ENCODE measurements at regions of chr14 and their contacts with region 1.

Region 1: GRCh38 chr14:37658156-37658555 is 62.7 kb downstream of the TTC6 start:
- DNase-seq: peak; percentile 34
- ATAC-seq: peak; percentile 54
- H3K4me3 ChIP-seq: no peak overlapping the region
- H3K27ac ChIP-seq: no peak overlapping the region
- H3K4me1 ChIP-seq: peaks cover 13% of the 10 kb centered on the region; the same call in 1 of the 2 replicates
- H3K27me3 ChIP-seq: no peaks in the 10 kb centered on the region
- CTCF ChIP-seq: no peak
- EP300 ChIP-seq: no peak
- POLR2A ChIP-seq: no peak
- RAD21 ChIP-seq: no peak

Region 2: GRCh38 chr14:37594238-37594914 is 63.8 kb before region 1 on chr14:
- CTCF ChIA-PET with region 1: no interaction called
- POLR2A ChIA-PET with region 1: no interaction called
- in situ Hi-C with region 1: no loop called
- intact Hi-C with region 1: no loop called
- DNase-seq: peak; percentile 99
- ATAC-seq: peak; percentile 19
- H3K4me3 ChIP-seq: peak overlapping the region; percentile 87 to 96 (median 95)
- H3K27ac ChIP-seq: peak overlapping the region; percentile 96
- H3K4me1 ChIP-seq: peaks cover 43% of the 10 kb centered on the region
- H3K27me3 ChIP-seq: no peaks in the 10 kb centered on the region; a peak in 1 of 5 replicates
- CTCF ChIP-seq: peak; percentile 95
- EP300 ChIP-seq: peak in 1 of 2 experiments; percentile 23; a peak in 1 of 4 replicates
- POLR2A ChIP-seq: no peak
- RAD21 ChIP-seq: peak; percentile 88

Region 3: GRCh38 chr14:37637341-37637740 is 20.8 kb before region 1 on chr14:
- CTCF ChIA-PET with region 1: no interaction called
- POLR2A ChIA-PET with region 1: no interaction called
- in situ Hi-C with region 1: no loop called
- intact Hi-C with region 1: loop called (anchors 2 kb)
- DNase-seq: no peak
- ATAC-seq: no peak
- H3K4me3 ChIP-seq: no peak overlapping the region
- H3K27ac ChIP-seq: no peak overlapping the region
- H3K4me1 ChIP-seq: no peaks in the 10 kb centered on the region
- H3K27me3 ChIP-seq: no peaks in the 10 kb centered on the region
- CTCF ChIP-seq: no peak
- EP300 ChIP-seq: no peak
- POLR2A ChIP-seq: no peak
- RAD21 ChIP-seq: no peak

Region 4: DNA sequence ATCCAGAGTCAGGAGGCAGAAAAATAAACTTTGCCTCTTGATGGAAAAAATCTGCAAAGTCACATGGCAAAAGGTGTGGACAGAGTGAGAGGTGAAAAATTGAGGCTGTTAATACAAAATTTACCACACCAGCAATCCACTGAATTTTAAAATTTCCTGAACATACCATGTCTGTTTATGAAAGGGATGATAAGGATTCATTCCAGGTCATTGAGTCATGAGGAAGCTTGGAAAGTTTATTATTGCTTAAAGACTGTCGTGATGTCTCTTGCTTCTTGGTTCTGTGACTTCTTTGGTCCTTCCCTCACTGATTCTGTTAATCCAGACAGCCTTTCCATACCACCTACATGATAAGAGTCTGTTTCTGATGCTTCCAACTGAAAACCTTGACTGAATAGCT is 10.5 kb after region 1 on chr14:
- CTCF ChIA-PET with region 1: no interaction called
- POLR2A ChIA-PET with region 1: no interaction called
- in situ Hi-C with region 1: no loop called
- intact Hi-C with region 1: no loop called
- DNase-seq: no peak
- ATAC-seq: no peak
- H3K4me3 ChIP-seq: no peak overlapping the region
- H3K27ac ChIP-seq: no peak overlapping the region
- H3K4me1 ChIP-seq: peaks cover 8% of the 10 kb centered on the region
- H3K27me3 ChIP-seq: no peaks in the 10 kb centered on the region
- CTCF ChIP-seq: no peak
- EP300 ChIP-seq: no peak
- POLR2A ChIP-seq: no peak
- RAD21 ChIP-seq: no peak

Measured in HepG2 (cell line).